ENCODE measurements at regions of chr10 and their contacts with region 1.

Region 1: GRCh38 chr10:112375721-112376395 is 1.9 kb downstream of the ACSL5 start:
- DNase-seq: peak; percentile 50
- ATAC-seq: peak; percentile 67
- H3K4me3 Mint-ChIP-seq: peak overlapping the region; percentile 99
- H3K27ac Mint-ChIP-seq: peak overlapping the region; percentile 100
- H3K4me1 Mint-ChIP-seq: peaks cover 69% of the 10 kb centered on the region
- H3K27me3 Mint-ChIP-seq: no peaks in the 10 kb centered on the region
- CTCF ChIP-seq: no peak

Region 2: DNA sequence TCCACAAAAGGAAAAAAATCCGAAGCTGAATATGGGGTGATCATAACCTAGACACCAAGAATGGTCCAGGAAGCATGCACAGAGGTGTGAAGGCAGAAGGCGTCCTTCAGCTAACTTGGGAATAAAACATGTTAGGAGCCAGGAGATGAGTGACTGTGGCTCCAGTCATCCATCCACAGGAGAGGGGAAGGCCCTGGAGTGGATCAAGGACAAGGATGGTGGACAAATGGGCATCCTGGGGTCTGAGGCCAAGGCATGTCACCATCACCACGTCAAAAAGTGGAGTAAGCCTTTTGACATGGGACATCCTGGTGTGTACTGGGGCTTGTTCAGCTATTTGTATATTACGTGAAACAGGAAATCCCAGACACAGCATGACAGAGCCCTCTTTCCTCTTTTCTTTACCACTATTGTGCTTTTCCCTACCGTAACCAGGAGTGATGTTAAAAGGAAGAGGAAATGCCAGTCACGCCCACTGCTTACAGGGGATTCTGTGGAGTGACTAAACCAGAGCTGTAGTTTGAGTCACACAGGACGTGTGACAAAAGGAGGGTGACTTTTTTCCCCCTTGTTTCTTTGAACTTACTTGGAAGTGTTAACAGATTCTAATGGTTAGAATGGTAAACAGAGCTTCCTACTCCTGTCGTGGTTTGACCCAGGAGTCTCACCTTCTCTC is 13.4 kb after region 1 on chr10:
- CTCF ChIA-PET with region 1: interaction called, 5 read pairs
- POLR2A ChIA-PET with region 1: interaction called, 27 read pairs
- intact Hi-C with region 1: no loop called
- DNase-seq: peak; percentile 68
- ATAC-seq: peak; percentile 91
- H3K4me3 Mint-ChIP-seq: no peak overlapping the region
- H3K27ac Mint-ChIP-seq: peak overlapping the region; percentile 76
- H3K4me1 Mint-ChIP-seq: peaks cover 64% of the 10 kb centered on the region
- H3K27me3 Mint-ChIP-seq: no peaks in the 10 kb centered on the region
- CTCF ChIP-seq: no peak

Region 3: GRCh38 chr10:112446855-112447711 is 71.2 kb after region 1 on chr10 and contains the starts of genes VTI1A and ZDHHC6:
- CTCF ChIA-PET with region 1: interaction called, 5 read pairs
- POLR2A ChIA-PET with region 1: interaction called, 16 read pairs
- intact Hi-C with region 1: no loop called
- DNase-seq: peak; percentile 89
- ATAC-seq: peak; percentile 93
- H3K4me3 Mint-ChIP-seq: peak within 1 kb of the TSS; percentile 88
- H3K27ac Mint-ChIP-seq: peak within 1 kb of the TSS; percentile 92
- H3K4me1 Mint-ChIP-seq: peaks cover 50% of the 10 kb centered on the region
- H3K27me3 Mint-ChIP-seq: no peaks in the 10 kb centered on the region
- CTCF ChIP-seq: no peak
- total RNA-seq, gene VTI1A: 29.4 to 30.0 TPM
- total RNA-seq, gene ZDHHC6: 36.6 to 37.6 TPM

Measured in activated CD8-positive, alpha-beta T cell treated with anti-CD3 and anti-CD28 coated beads for 36 hours (primary cell).